ENCODE measurements at regions of chr1 and their contacts with region 1.

Region 1: DNA sequence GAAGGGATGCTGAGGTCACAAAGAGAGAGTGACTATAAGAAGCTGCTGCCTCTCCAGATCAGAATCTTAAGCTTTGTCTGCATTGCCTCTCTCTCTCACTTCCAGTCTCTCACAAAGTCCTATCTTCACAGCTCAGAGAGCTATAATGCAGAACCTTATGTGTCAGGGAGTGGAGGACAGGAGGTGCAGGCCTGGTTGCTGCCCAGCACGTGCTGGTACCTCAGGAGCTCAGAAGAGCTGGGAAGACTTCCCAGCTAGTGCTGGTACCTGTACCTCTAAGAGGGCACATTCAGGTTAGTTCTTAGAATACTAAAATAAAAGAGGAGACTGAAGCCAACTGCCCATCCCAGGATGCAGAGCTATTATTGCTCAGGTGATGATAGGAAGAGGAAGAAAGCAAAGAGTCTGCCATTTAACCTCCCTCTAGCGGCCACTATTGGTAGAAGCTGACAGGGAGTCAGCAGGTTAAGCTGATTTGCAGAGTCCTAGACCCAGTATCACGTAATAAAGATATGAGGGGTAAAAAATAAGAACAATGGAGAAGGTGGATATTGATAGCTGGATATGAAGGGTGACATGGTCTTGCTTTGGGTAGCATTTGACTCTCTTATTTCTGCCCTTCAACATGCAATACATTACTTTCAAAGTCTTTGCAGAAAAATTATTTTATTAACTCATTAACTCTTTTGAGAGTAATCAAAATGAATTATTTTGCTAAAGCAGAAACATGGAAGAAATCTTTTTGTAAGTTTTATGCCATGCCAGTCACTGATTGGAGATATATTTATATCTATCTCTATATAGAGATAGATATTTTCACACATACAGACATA is 138.1 kb upstream of the HMCN1 start:
- DNase-seq: peak; percentile 67
- ATAC-seq: peak; percentile 81
- H3K4me3 ChIP-seq: no peak overlapping the region
- H3K4me3 Mint-ChIP-seq: no peak overlapping the region
- H3K27ac ChIP-seq: no peak overlapping the region
- H3K27ac Mint-ChIP-seq: no peak overlapping the region
- H3K4me1 ChIP-seq: peaks cover 14 to 26% of the 10 kb centered on the region in 2 donors
- H3K4me1 Mint-ChIP-seq: peaks cover 29% of the 10 kb centered on the region
- H3K27me3 ChIP-seq: no peaks in the 10 kb centered on the region
- H3K27me3 Mint-ChIP-seq: no peaks in the 10 kb centered on the region
- CTCF ChIP-seq: peak; percentile 76

Region 2: DNA sequence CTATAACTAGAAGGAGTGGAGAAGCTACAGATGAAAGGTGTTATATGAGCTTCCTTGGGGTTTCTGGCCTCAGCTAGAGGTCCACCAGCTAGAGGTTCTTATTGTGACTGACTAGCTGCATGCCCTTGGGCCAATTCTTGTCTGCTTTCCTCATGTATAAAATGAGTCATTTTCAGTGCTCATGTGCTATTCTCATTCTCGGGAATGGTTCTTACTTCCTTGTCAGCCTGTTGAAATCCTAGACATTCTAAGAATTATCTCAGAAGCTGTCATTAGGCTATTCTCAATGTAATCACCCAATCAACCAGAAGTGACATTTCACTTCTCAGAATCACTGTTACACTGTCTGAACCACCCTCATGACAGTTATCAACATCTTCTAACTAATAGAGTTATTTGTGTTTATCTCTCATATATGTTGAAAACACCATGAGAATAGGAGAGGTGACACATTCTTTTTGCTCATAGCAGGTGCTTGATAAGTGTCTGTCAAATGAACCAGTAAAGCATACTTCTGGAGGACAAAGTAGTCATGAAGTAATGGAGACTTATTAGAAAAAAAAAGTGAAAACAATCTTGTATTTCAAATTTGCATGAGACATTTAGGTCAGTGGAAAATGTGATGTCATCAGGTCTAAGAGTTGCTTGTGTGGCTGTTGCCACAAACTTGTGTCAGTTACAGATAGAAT is 156.2 kb before region 1 on chr1:
- CTCF ChIA-PET with region 1: interaction called, 4 read pairs
- POLR2A ChIA-PET with region 1: no interaction called
- intact Hi-C with region 1: loop called (anchors 5 kb)
- DNase-seq: peak; percentile 51
- ATAC-seq: peak; percentile 83
- H3K4me3 ChIP-seq: no peak overlapping the region
- H3K4me3 Mint-ChIP-seq: no peak overlapping the region
- H3K27ac ChIP-seq: peak overlapping the region in 1 of 2 donors; percentile 54
- H3K27ac Mint-ChIP-seq: no peak overlapping the region
- H3K4me1 ChIP-seq: peaks cover 14 to 17% of the 10 kb centered on the region in 2 donors
- H3K4me1 Mint-ChIP-seq: peaks cover 3% of the 10 kb centered on the region
- H3K27me3 ChIP-seq: no peaks in the 10 kb centered on the region
- H3K27me3 Mint-ChIP-seq: no peaks in the 10 kb centered on the region
- CTCF ChIP-seq: no peak

Region 3: DNA sequence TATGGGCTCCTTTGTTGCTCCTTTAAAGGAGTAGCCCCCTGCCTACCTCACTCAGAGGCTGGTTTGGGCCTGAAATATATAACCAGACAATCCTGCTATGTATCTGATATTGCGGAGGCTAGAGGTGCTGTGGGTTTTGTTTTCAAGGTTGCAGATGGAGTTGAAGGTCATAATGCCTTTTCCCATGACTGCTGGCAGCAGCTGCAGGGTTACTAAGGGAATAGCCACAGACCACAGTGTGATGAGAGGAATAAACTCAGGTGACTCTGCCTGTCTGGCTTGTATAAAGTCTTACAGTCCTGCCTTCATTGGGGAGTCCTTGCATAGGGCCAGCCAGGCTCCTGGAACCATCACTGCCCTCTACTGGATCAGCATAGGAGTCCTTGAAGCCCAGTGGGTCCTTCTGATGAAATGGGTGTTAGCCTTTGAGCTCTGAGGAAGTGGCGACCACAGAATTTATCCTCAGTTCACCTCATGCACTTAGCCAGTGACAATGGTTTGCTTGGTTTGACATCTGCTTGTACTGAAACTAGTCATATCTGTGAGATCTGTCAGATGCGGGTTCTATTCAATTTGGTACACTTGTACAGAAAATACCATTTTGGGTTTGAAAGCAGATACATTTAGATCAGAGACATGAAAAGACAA is 36.2 kb before region 1 on chr1:
- CTCF ChIA-PET with region 1: interaction called, 21 read pairs
- POLR2A ChIA-PET with region 1: interaction called, 3 read pairs
- intact Hi-C with region 1: no loop called
- DNase-seq: peak; percentile 60
- ATAC-seq: peak; percentile 79
- H3K4me3 ChIP-seq: no peak overlapping the region
- H3K4me3 Mint-ChIP-seq: peak overlapping the region; percentile 5
- H3K27ac ChIP-seq: peak overlapping the region in 1 of 2 donors; percentile 25
- H3K27ac Mint-ChIP-seq: peak overlapping the region; percentile 28
- H3K4me1 ChIP-seq: peaks cover 16 to 17% of the 10 kb centered on the region in 2 donors
- H3K4me1 Mint-ChIP-seq: peaks cover 26% of the 10 kb centered on the region
- H3K27me3 ChIP-seq: no peaks in the 10 kb centered on the region
- H3K27me3 Mint-ChIP-seq: no peaks in the 10 kb centered on the region
- CTCF ChIP-seq: no peak

Region 4: DNA sequence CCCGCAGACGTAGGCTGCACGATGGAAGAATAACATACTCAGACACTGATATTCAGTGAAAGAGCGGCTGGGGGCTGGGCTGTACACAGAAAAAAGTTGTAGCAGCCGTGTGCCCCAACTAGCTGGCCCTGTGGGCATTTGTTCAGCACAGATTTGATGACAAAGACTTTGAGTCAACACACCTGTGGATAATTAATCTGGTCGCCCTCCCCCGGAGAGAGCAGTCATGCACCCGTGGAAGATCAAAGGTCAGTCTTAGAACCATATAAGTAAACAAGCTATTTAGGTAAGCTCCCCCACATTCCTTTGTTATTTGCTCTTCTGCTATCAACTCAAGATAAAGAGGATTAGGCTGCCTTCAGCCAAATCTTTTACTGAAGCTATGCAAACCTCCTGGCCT is 10.3 kb before region 1 on chr1:
- CTCF ChIA-PET with region 1: interaction called, 14 read pairs
- POLR2A ChIA-PET with region 1: interaction called, 3 read pairs
- intact Hi-C with region 1: no loop called
- DNase-seq: no peak
- ATAC-seq: no peak
- H3K4me3 ChIP-seq: no peak overlapping the region
- H3K4me3 Mint-ChIP-seq: no peak overlapping the region
- H3K27ac ChIP-seq: no peak overlapping the region
- H3K27ac Mint-ChIP-seq: no peak overlapping the region
- H3K4me1 ChIP-seq: no peaks in the 10 kb centered on the region
- H3K4me1 Mint-ChIP-seq: no peaks in the 10 kb centered on the region
- H3K27me3 ChIP-seq: peaks cover 0 to 5% (median 2%) of the 10 kb centered on the region in 4 experiments
- H3K27me3 Mint-ChIP-seq: peaks cover 6% of the 10 kb centered on the region
- CTCF ChIP-seq: no peak

Region 5: GRCh38 chr1:185670187-185670627 is 74.2 kb after region 1 on chr1:
- CTCF ChIA-PET with region 1: interaction called, 23 read pairs
- POLR2A ChIA-PET with region 1: no interaction called
- intact Hi-C with region 1: loop called (anchors 5 kb)
- DNase-seq: peak; percentile 73
- ATAC-seq: peak; percentile 65
- H3K4me3 ChIP-seq: no peak overlapping the region
- H3K4me3 Mint-ChIP-seq: no peak overlapping the region
- H3K27ac ChIP-seq: no peak overlapping the region
- H3K27ac Mint-ChIP-seq: no peak overlapping the region
- H3K4me1 ChIP-seq: peaks cover 24 to 26% of the 10 kb centered on the region in 2 donors
- H3K4me1 Mint-ChIP-seq: peaks cover 30% of the 10 kb centered on the region
- H3K27me3 ChIP-seq: no peaks in the 10 kb centered on the region
- H3K27me3 Mint-ChIP-seq: no peaks in the 10 kb centered on the region
- CTCF ChIP-seq: peak; percentile 73

Region 6: GRCh38 chr1:185727726-185728125 is 131.7 kb after region 1 on chr1:
- CTCF ChIA-PET with region 1: no interaction called
- POLR2A ChIA-PET with region 1: no interaction called
- intact Hi-C with region 1: no loop called
- DNase-seq: no peak
- ATAC-seq: no peak
- H3K4me3 ChIP-seq: no peak overlapping the region
- H3K4me3 Mint-ChIP-seq: no peak overlapping the region
- H3K27ac ChIP-seq: no peak overlapping the region
- H3K27ac Mint-ChIP-seq: no peak overlapping the region
- H3K4me1 ChIP-seq: no peaks in the 10 kb centered on the region
- H3K4me1 Mint-ChIP-seq: no peaks in the 10 kb centered on the region
- H3K27me3 ChIP-seq: peaks cover 0 to 18% (median 6%) of the 10 kb centered on the region in 4 experiments
- H3K27me3 Mint-ChIP-seq: peaks cover 39% of the 10 kb centered on the region
- CTCF ChIP-seq: no peak